ENCODE measurements at regions of chr3 and their contacts with region 1.

Region 1: GRCh38 chr3:111080413-111080812 is 8.8 kb downstream of the NECTIN3 start:
- DNase-seq: peak; percentile 37
- H3K4me3 ChIP-seq: no peak overlapping the region; the same call in 1 of the 2 replicates
- H3K27ac ChIP-seq: no peak overlapping the region
- H3K27me3 ChIP-seq: no peaks in the 10 kb centered on the region
- CTCF ChIP-seq: peak; percentile 67

Region 2: GRCh38 chr3:109532257-109533216 is 1547.9 kb before region 1 on chr3:
- CTCF ChIA-PET with region 1: interaction called, 14 read pairs
- POLR2A ChIA-PET with region 1: no interaction called
- DNase-seq: peak; percentile 82
- H3K4me3 ChIP-seq: no peak overlapping the region
- H3K27ac ChIP-seq: no peak overlapping the region
- H3K27me3 ChIP-seq: no peaks in the 10 kb centered on the region
- CTCF ChIP-seq: peak; percentile 77

Region 3: DNA sequence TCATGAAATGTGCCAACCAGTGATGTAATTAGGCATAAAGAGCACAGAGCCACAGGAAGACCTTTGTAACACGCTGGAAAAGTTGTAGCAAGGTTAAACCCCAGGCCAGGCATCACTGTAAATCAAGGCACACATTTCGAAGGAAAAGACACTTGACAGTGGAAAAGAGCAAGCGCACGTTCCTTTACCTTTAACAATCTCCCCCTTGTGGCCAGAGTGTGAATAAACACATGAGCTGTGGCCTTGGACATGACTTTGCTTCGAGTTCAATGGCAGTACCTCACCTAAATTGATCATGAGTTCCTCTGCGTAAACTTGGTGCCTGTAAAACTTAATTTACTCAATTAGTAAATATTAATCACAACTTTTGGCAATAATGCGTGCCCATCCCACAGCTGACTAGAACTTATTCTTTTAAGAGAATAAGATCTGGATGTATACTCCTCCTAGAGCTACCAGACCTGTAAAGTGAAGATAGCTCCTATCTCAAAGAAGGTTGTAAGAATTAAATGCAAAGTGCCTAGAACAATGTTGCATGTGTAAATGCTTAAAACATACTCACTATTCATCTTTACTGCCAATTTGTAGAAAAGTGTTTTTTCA is 765.8 kb before region 1 on chr3:
- CTCF ChIA-PET with region 1: interaction called, 11 read pairs
- POLR2A ChIA-PET with region 1: no interaction called
- DNase-seq: no peak
- H3K4me3 ChIP-seq: no peak overlapping the region
- H3K27ac ChIP-seq: no peak overlapping the region
- H3K27me3 ChIP-seq: no peaks in the 10 kb centered on the region
- CTCF ChIP-seq: peak; percentile 58

Region 4: GRCh38 chr3:110567029-110567428 is 513.4 kb before region 1 on chr3:
- CTCF ChIA-PET with region 1: interaction called, 4 read pairs
- POLR2A ChIA-PET with region 1: interaction called, 10 read pairs
- DNase-seq: peak; percentile 34
- H3K4me3 ChIP-seq: no peak overlapping the region
- H3K27ac ChIP-seq: no peak overlapping the region
- H3K27me3 ChIP-seq: no peaks in the 10 kb centered on the region
- CTCF ChIP-seq: no peak

Region 5: GRCh38 chr3:111112913-111113312 is 32.5 kb after region 1 on chr3:
- CTCF ChIA-PET with region 1: interaction called, 11 read pairs
- POLR2A ChIA-PET with region 1: no interaction called
- DNase-seq: no peak
- H3K4me3 ChIP-seq: no peak overlapping the region
- H3K27ac ChIP-seq: no peak overlapping the region
- H3K27me3 ChIP-seq: no peaks in the 10 kb centered on the region
- CTCF ChIP-seq: no peak

Measured in AG04450 (cell line).